Naive thymus-derived CD4-positive, alpha-beta T cell (primary cell): ENCODE measurements at regions of chr7 and their contacts with region 1.

Region 1: GRCh38 chr7:21352540-21353387 is 75.1 kb upstream of the SP4 start:
- DNase-seq: peak in 7 of 9 donors; percentile 25 to 60 (median 47)
- ATAC-seq: peak; percentile 80
- H3K4me3 ChIP-seq: peak overlapping the region; percentile 22
- H3K4me3 Mint-ChIP-seq: peak overlapping the region; percentile 51 to 86 (median 76)
- H3K27ac ChIP-seq: peak overlapping the region; percentile 43
- H3K27ac Mint-ChIP-seq: peak overlapping the region; percentile 76 to 95 (median 89)
- H3K4me1 ChIP-seq: peaks cover 41 to 56% of the 10 kb centered on the region in 2 donors
- H3K4me1 Mint-ChIP-seq: peaks cover 39 to 68% (median 54%) of the 10 kb centered on the region in 7 donors
- H3K27me3 ChIP-seq: no peaks in the 10 kb centered on the region
- H3K27me3 Mint-ChIP-seq: no peaks in the 10 kb centered on the region

Region 2: GRCh38 chr7:21293771-21294170 is 59.0 kb before region 1 on chr7:
- CTCF ChIA-PET with region 1: no interaction called
- POLR2A ChIA-PET with region 1: no interaction called
- intact Hi-C with region 1: loop called in 1 of 2 experiments (anchors 5 kb)
- DNase-seq: no peak
- ATAC-seq: no peak
- H3K4me3 ChIP-seq: no peak overlapping the region
- H3K4me3 Mint-ChIP-seq: no peak overlapping the region
- H3K27ac ChIP-seq: no peak overlapping the region
- H3K27ac Mint-ChIP-seq: no peak overlapping the region
- H3K4me1 ChIP-seq: no peaks in the 10 kb centered on the region
- H3K4me1 Mint-ChIP-seq: no peaks in the 10 kb centered on the region
- H3K27me3 ChIP-seq: no peaks in the 10 kb centered on the region
- H3K27me3 Mint-ChIP-seq: peaks cover 0 to 3% (median 0%) of the 10 kb centered on the region in 5 donors

Region 3: GRCh38 chr7:21365866-21366624 is 13.3 kb after region 1 on chr7:
- CTCF ChIA-PET with region 1: interaction called, 4 read pairs
- POLR2A ChIA-PET with region 1: no interaction called
- intact Hi-C with region 1: loop called in 1 of 2 experiments (anchors 1 kb)
- DNase-seq: no peak
- ATAC-seq: no peak
- H3K4me3 ChIP-seq: no peak overlapping the region
- H3K4me3 Mint-ChIP-seq: peak overlapping the region in 1 of 10 donors; percentile 49
- H3K27ac ChIP-seq: no peak overlapping the region
- H3K27ac Mint-ChIP-seq: peak overlapping the region in 1 of 9 donors; percentile 62
- H3K4me1 ChIP-seq: peaks cover 0 to 13% of the 10 kb centered on the region in 2 donors
- H3K4me1 Mint-ChIP-seq: peaks cover 4 to 58% (median 9%) of the 10 kb centered on the region in 7 donors
- H3K27me3 ChIP-seq: no peaks in the 10 kb centered on the region
- H3K27me3 Mint-ChIP-seq: no peaks in the 10 kb centered on the region

Region 4: DNA sequence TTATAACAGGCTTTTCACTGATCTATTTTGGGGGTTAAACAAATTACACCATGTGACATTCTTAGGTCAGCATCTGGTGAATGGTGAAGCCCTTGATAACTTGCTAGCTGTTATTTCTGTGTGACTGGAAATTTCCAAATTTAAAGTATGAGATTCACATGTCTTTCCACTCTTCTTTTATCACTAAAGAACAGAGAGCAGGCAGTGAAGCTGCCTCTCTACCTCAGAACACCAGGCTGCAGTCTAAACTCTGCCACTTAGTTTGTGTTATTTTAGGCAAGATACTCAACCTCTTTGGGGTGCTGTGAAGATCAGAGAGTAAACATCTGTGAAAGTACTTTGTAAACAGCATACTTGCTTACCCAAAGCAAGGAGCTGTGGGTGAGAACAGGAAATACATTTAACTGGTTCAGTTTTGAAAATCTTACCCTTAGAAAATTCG is 59.7 kb after region 1 on chr7:
- CTCF ChIA-PET with region 1: no interaction called
- POLR2A ChIA-PET with region 1: no interaction called
- intact Hi-C with region 1: loop called in 1 of 2 experiments (anchors 1 kb)
- DNase-seq: peak in 3 of 9 donors; percentile 7 to 23 (median 16)
- ATAC-seq: peak; percentile 72
- H3K4me3 ChIP-seq: peak overlapping the region; percentile 6
- H3K4me3 Mint-ChIP-seq: peak overlapping the region in 3 of 10 donors; percentile 14 to 70 (median 18)
- H3K27ac ChIP-seq: no peak overlapping the region
- H3K27ac Mint-ChIP-seq: peak overlapping the region in 6 of 9 donors; percentile 1 to 90 (median 28)
- H3K4me1 ChIP-seq: peaks cover 0 to 29% of the 10 kb centered on the region in 2 donors
- H3K4me1 Mint-ChIP-seq: peaks cover 7 to 57% (median 17%) of the 10 kb centered on the region in 7 donors
- H3K27me3 ChIP-seq: no peaks in the 10 kb centered on the region
- H3K27me3 Mint-ChIP-seq: peaks cover 0 to 4% (median 0%) of the 10 kb centered on the region in 5 donors

Region 5: GRCh38 chr7:22697876-22698606 is 1345.3 kb after region 1 on chr7:
- CTCF ChIA-PET with region 1: no interaction called
- POLR2A ChIA-PET with region 1: no interaction called
- intact Hi-C with region 1: loop called in 1 of 2 experiments (anchors 10 kb)
- DNase-seq: peak in 4 of 9 donors; percentile 10 to 25 (median 16)
- ATAC-seq: peak; percentile 79
- H3K4me3 ChIP-seq: no peak overlapping the region
- H3K4me3 Mint-ChIP-seq: peak overlapping the region in 3 of 10 donors; percentile 0 to 69 (median 31)
- H3K27ac ChIP-seq: no peak overlapping the region
- H3K27ac Mint-ChIP-seq: peak overlapping the region in 2 of 9 donors; percentile 23 to 73
- H3K4me1 ChIP-seq: peaks cover 3 to 31% of the 10 kb centered on the region in 2 donors
- H3K4me1 Mint-ChIP-seq: peaks cover 32 to 77% (median 46%) of the 10 kb centered on the region in 7 donors
- H3K27me3 ChIP-seq: no peaks in the 10 kb centered on the region
- H3K27me3 Mint-ChIP-seq: peaks cover 0 to 19% (median 0%) of the 10 kb centered on the region in 5 donors